ENCODE measurements at regions of chr17 and their contacts with region 1.

Region 1: GRCh38 chr17:73429440-73430164 is 117.8 kb upstream of the CDC42EP4 start:
- DNase-seq: peak; percentile 76 to 85
- H3K4me3 ChIP-seq: no peak overlapping the region
- H3K27ac ChIP-seq: no peak overlapping the region
- H3K4me1 ChIP-seq: no peaks in the 10 kb centered on the region
- H3K27me3 ChIP-seq: peaks cover 0 to 3% of the 10 kb centered on the region in 2 donors
- CTCF ChIP-seq: peak; percentile 76 to 95 (median 92)
- POLR2A ChIP-seq: no peak

Region 2: DNA sequence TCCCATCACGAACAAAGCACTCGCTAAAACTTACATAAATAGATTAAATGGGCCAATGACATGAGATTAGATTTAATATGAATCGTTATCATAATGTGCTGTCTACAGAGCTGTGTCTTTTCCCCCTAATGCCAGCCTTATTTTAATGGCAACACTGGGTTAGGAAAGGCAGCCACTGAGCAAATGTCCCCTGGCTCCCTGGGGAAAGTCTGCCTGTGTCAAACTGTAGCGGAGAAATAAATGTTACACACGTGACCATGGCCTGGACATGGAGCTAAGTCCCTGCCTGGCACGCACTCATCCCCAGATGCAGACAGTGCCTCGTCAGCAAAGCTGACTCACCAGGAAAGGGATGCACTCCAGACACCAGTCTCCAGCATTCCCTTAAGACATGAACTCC is 276.0 kb after region 1 on chr17:
- intact Hi-C with region 1: loop called (anchors 10 kb)
- DNase-seq: no peak
- H3K4me3 ChIP-seq: no peak overlapping the region
- H3K27ac ChIP-seq: no peak overlapping the region
- H3K4me1 ChIP-seq: no peaks in the 10 kb centered on the region
- H3K27me3 ChIP-seq: peaks cover 0 to 28% of the 10 kb centered on the region in 2 donors
- CTCF ChIP-seq: no peak
- POLR2A ChIP-seq: no peak

Region 3: GRCh38 chr17:74176546-74177001 is 747.0 kb after region 1 on chr17:
- intact Hi-C with region 1: loop called (anchors 10 kb)
- DNase-seq: no peak
- H3K4me3 ChIP-seq: no peak overlapping the region
- H3K27ac ChIP-seq: no peak overlapping the region
- H3K4me1 ChIP-seq: no peaks in the 10 kb centered on the region
- H3K27me3 ChIP-seq: peaks cover 0 to 22% of the 10 kb centered on the region in 2 donors
- CTCF ChIP-seq: peak; percentile 10 to 75 (median 69)
- POLR2A ChIP-seq: no peak